SK-N-SH (cell line): ENCODE measurements at regions of chr7 and their contacts with region 1.

Region 1: DNA sequence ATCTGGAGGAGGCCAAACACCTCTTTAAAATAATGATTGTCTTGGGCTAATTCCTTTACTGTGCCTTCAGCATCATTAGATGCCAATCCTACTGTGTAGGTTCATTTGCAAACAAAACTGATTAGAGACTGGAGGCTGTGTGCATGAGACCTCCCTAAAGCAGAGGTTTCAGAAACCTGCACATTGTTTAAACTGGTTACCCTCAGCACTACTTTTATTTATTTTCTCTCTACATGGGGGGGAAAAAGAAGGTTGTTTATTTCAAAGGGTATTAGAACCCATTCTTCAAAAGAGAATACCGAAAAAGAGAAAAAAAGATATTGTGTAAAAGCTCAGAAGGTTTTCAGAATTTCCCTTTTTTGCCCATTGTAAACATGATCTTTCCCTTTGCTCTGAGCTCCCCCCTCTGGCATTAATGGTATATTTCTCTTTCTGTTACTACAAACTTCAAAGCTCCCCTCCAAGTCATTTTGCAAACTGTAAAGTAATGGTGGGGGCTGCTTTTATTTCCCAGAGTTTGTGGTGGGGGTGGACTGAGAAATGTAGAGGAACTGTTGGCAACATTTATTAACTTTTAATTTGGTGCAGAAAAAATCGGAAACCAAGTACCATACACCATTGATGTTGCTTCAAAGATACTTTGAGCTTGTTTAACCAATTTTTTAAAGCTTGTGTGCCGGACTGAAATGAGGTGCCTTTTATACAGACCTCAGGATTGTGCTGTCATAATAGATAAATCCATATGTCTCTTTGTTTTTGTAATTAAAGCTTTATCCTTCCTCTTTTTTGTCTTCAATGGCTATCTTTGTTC is 181.4 kb downstream of the EXOC4 start:
- DNase-seq: peak; percentile 61
- H3K4me3 ChIP-seq: no peak overlapping the region
- H3K27ac ChIP-seq: peak overlapping the region in 1 of 2 experiments; percentile 92; a peak in 2 of 4 replicates
- H3K4me1 ChIP-seq: peaks cover 22 to 30% of the 10 kb centered on the region in 2 experiments; a peak in 3 of 4 replicates
- H3K27me3 ChIP-seq: no peaks in the 10 kb centered on the region
- CTCF ChIP-seq: peak; percentile 83
- EP300 ChIP-seq: no peak
- RAD21 ChIP-seq: peak; percentile 93

Region 2: DNA sequence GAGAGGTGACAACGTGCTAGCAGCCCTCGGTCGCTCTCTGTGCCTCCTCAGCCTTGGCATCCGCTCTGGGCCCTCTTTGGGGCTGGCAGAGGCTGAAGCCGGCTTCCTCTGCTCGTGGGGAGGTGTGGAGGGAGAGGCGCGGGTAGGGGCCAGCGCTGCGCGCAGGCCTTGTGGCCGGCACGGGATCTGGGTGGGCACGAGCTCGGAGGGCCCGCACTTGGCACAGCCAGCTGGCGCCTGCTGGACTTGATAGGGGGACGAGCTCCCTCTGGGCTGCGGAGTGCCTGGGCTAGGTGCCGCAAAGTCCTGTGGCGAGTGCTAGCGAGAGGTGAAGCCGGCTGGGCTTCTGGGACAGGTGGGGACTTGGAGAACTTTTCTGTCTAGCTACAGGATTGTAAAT is 10.6 kb before region 1 on chr7:
- CTCF ChIA-PET with region 1: interaction called, 13 read pairs
- POLR2A ChIA-PET with region 1: no interaction called
- DNase-seq: no peak
- H3K4me3 ChIP-seq: no peak overlapping the region
- H3K27ac ChIP-seq: no peak overlapping the region
- H3K4me1 ChIP-seq: no peaks in the 10 kb centered on the region; a peak in 2 of 4 replicates
- H3K27me3 ChIP-seq: no peaks in the 10 kb centered on the region
- CTCF ChIP-seq: no peak
- EP300 ChIP-seq: no peak
- RAD21 ChIP-seq: no peak

Region 3: GRCh38 chr7:133448012-133448411 is 13.8 kb after region 1 on chr7:
- CTCF ChIA-PET with region 1: interaction called, 12 read pairs
- POLR2A ChIA-PET with region 1: no interaction called
- DNase-seq: no peak
- H3K4me3 ChIP-seq: no peak overlapping the region
- H3K27ac ChIP-seq: no peak overlapping the region
- H3K4me1 ChIP-seq: peaks cover 0 to 2% of the 10 kb centered on the region in 2 experiments; a peak in 1 of 4 replicates
- H3K27me3 ChIP-seq: no peaks in the 10 kb centered on the region
- CTCF ChIP-seq: no peak
- EP300 ChIP-seq: no peak
- RAD21 ChIP-seq: no peak